Activated naive CD4-positive, alpha-beta T cell treated with anti-CD3 and anti-CD28 coated beads for 36 hours (primary cell): ENCODE measurements at regions of chr16 and their contacts with region 1.

Region 1: GRCh38 chr16:69930117-69930776 is 20.9 kb upstream of the CLEC18A start:
- DNase-seq: peak; percentile 59
- H3K4me3 Mint-ChIP-seq: no peak overlapping the region
- H3K27ac Mint-ChIP-seq: no peak overlapping the region
- H3K4me1 Mint-ChIP-seq: no peaks in the 10 kb centered on the region
- H3K27me3 Mint-ChIP-seq: no peaks in the 10 kb centered on the region

Region 2: DNA sequence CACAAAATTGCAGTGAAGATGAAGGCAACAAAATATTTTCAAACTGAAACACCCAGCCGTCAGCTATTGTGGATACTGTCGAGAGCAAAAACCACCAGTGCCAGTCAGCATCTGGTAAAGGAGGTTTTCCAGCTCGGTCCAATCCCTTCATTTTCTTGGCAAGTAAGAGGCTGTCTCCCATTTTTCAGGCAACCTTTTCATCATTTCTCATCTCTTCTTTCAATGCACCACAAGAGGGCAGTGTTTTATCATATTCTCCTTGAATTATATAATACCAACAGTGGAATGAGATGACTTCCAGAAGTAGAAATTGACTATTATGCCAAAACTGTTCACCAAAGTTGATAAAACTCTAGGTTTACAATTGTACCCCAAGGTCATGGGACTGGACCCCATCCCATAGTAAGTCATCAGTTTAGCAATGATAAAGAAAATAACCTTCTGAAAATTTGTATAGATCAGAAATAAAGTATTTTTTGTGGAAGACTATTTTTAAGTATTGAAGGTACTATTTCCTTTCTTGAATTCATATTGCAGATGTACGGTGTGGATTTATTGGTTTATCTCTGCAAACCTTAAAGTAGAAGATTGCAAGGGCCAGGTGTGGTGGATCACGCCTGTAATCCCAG is 220.7 kb before region 1 on chr16:
- CTCF ChIA-PET with region 1: interaction called, 6 read pairs
- intact Hi-C with region 1: loop called (anchors 2 kb)
- DNase-seq: no peak
- H3K4me3 Mint-ChIP-seq: no peak overlapping the region
- H3K27ac Mint-ChIP-seq: no peak overlapping the region
- H3K4me1 Mint-ChIP-seq: peaks cover 8% of the 10 kb centered on the region
- H3K27me3 Mint-ChIP-seq: no peaks in the 10 kb centered on the region

Region 3: DNA sequence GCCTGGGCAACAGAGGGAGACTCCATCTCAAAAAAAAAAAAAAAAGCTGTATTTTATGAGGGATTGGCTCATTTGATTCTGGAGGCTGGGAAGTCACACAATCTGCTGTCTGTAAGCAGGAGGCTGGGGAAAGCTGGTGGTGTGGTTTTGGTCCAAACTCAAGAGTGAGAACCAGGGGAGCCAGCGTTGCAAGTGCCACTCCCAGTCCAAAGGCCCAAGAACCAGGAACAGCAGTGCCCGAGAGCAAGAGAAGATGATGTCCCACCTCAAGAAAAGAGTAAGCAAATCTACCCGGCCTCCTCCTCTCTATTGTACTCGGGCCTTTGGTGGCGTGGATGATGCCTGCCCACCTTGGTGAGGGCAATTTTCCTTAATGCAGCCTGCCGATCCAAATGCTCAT is 198.1 kb before region 1 on chr16:
- CTCF ChIA-PET with region 1: no interaction called
- intact Hi-C with region 1: no loop called
- DNase-seq: no peak
- H3K4me3 Mint-ChIP-seq: no peak overlapping the region
- H3K27ac Mint-ChIP-seq: no peak overlapping the region
- H3K4me1 Mint-ChIP-seq: peaks cover 8% of the 10 kb centered on the region
- H3K27me3 Mint-ChIP-seq: no peaks in the 10 kb centered on the region

Region 4: GRCh38 chr16:69870761-69871160 is 59.5 kb before region 1 on chr16:
- CTCF ChIA-PET with region 1: interaction called, 11 read pairs
- intact Hi-C with region 1: no loop called
- DNase-seq: no peak
- H3K4me3 Mint-ChIP-seq: no peak overlapping the region
- H3K27ac Mint-ChIP-seq: no peak overlapping the region
- H3K4me1 Mint-ChIP-seq: no peaks in the 10 kb centered on the region
- H3K27me3 Mint-ChIP-seq: no peaks in the 10 kb centered on the region

Region 5: DNA sequence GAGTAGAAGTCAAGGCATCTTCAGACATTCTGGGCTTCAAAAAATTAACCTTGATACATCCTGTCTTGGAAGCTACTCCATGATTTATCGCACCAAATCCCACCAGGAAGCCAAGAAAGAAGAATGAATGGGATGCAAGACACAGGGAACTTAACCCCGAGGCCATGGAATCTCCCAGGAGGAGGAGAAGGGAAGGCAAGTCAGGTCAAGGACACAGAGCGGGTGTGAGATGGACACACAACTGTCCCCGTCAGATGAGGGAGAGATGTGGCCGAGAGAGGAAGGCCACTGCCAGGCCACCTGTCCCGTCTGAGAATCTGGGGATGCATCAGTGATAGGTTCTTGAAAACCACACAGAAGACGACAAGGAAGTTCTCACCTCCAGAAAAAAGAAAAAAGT is 15.4 kb before region 1 on chr16:
- CTCF ChIA-PET with region 1: interaction called, 19 read pairs
- intact Hi-C with region 1: no loop called
- DNase-seq: no peak
- H3K4me3 Mint-ChIP-seq: no peak overlapping the region
- H3K27ac Mint-ChIP-seq: no peak overlapping the region
- H3K4me1 Mint-ChIP-seq: no peaks in the 10 kb centered on the region
- H3K27me3 Mint-ChIP-seq: no peaks in the 10 kb centered on the region

Region 6: DNA sequence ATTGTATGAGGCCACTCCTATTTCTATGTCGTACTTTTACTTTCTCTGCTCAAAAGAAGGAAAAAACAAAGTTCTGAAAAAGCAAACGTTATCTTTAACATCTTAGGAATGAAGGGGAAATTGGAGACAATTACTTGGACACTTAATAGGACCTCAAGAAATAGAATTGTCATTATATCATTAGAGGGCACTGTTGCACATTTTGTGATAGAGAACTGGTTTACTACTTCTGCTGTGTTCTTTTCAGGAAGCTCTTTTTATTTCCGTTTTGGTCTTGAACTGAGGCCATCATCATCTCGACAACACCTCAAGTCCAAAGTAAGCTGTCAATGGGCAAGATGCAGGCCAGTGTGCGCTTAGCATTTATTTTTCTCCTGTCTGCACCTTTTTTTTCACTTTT is 578.5 kb after region 1 on chr16:
- CTCF ChIA-PET with region 1: no interaction called
- intact Hi-C with region 1: no loop called
- DNase-seq: no peak
- H3K4me3 Mint-ChIP-seq: no peak overlapping the region
- H3K27ac Mint-ChIP-seq: no peak overlapping the region
- H3K4me1 Mint-ChIP-seq: peaks cover 2% of the 10 kb centered on the region
- H3K27me3 Mint-ChIP-seq: no peaks in the 10 kb centered on the region